ENCODE measurements at regions of chr2 and their contacts with region 1.

Region 1: DNA sequence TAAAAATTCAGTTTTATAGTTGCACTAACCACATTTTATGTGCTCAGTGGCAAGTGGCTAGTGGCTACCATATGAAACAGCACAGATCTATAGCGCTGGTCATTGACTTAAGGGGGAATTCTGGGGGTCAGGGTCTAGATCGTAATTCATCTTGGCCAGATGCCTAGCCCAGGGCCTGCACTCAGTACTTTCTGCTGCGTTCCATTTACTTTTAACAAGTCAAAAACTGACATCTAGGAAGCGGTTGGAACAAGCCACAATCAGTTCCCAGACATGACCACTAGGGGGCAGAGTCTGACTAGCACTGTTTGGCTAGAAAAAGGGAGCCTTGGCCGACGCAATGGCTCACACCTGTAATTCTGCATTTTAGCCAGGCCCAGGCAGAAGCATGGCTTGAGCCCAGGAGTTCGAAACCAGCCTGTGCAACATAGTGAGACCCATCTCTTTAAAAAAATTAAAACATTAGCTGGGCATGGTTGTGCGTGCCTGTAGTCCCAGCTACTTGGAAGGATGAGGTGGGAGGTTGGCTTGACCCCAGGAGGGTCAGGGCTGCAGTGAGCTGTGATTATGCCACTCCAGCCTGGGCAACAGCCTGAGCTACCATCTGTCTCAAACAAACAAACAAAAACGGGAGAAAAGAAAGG is 9.0 kb upstream of the TMBIM1 start:
- DNase-seq: peak; percentile 82 to 90 (median 83)
- H3K4me3 ChIP-seq: no peak overlapping the region
- H3K27ac ChIP-seq: no peak overlapping the region
- H3K4me1 ChIP-seq: peaks cover 2% of the 10 kb centered on the region
- H3K27me3 ChIP-seq: no peaks in the 10 kb centered on the region
- CTCF ChIP-seq: peak; percentile 93 to 98 (median 94)
- EP300 ChIP-seq: no peak
- POLR2A ChIP-seq: no peak

Region 2: DNA sequence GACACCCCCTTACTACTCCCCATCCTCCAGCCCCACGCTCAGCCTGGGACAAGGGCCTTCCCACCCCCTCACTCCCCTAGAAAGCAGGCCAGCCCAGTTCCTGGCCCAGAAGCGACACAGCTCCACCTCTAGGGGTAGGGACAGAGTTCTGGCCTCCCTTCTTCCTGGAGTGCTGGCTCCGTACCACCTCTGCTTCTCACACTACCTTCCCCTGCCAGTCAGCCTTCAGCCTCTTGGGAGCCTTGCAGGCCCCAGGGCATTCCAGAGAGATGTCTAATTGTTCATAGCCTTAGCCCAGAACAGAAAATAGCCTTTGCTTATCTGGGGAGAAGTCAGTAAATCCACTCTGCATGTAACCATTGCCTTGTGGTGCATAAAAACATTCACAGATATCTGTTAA is 42.3 kb after region 1 on chr2:
- intact Hi-C with region 1: no loop called
- DNase-seq: no peak
- H3K4me3 ChIP-seq: no peak overlapping the region
- H3K27ac ChIP-seq: no peak overlapping the region
- H3K4me1 ChIP-seq: no peaks in the 10 kb centered on the region
- H3K27me3 ChIP-seq: no peaks in the 10 kb centered on the region
- CTCF ChIP-seq: no peak
- EP300 ChIP-seq: no peak
- POLR2A ChIP-seq: no peak

Region 3: DNA sequence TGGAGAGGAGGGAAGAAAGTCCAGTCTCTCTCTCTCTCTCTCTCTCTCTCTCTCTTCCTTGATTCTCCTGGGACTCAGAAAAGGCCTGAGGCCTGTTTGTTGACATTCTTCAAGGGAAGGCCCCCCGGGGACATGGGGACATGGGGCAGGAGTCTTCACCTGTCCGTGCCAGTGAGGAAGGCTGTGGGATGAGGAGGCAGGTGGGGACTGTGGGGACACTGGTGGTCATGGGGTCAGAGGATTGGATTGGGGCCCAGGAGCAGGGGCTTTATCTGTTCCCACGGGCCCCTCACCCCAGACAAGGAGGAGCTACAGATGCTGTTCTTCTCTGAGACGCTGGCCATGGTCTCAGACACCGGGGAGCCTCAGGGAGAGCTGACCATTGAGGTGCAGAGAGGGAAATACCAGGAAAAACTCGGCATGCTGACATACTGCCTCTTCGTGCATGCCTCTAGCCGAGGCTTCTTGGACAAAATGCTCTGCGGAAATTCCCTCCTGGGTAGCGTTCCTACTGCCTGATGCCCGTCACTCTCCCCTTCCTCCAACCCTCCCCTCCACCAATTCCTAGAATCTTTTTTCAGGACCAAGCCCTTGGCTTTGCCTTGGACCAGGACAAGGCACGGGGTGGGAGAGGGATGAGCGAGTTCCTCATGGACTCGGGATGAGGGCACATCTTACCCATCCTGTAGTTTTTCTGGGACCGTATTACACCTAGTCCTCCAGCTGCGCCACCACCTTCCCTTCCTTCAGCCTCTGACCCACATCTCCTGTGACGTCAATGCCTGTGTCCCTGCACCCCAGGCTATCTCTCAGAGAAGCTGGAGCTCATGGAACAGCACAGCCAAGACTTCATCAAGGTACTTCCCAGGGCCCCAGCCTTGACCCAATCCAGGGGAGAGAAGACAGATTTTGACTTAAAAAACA is 56.2 kb after region 1 on chr2:
- intact Hi-C with region 1: no loop called
- DNase-seq: no peak
- H3K4me3 ChIP-seq: no peak overlapping the region
- H3K27ac ChIP-seq: no peak overlapping the region
- H3K4me1 ChIP-seq: peaks cover 1% of the 10 kb centered on the region
- H3K27me3 ChIP-seq: no peaks in the 10 kb centered on the region
- CTCF ChIP-seq: no peak
- EP300 ChIP-seq: no peak
- POLR2A ChIP-seq: no peak

Region 4: DNA sequence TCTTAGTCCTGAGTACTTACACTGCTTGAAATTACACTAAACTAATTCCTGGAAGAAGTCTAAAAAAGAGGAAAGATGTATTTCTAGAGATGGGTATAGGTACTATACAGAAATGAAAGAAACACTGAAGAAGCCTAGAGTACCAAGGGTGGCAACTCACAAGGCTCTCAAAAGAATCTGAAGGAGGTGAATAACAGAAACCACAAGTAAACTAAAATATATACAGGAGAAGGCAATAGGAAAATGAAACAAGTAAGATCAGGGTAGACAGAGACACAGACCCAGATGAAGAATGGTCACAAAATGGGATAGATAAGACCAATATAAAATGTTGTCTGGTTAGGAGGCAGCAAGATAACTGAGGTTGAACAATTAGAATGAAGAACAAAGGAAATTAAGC is 207.0 kb after region 1 on chr2:
- intact Hi-C with region 1: no loop called
- DNase-seq: no peak
- H3K4me3 ChIP-seq: no peak overlapping the region
- H3K27ac ChIP-seq: no peak overlapping the region
- H3K4me1 ChIP-seq: no peaks in the 10 kb centered on the region
- H3K27me3 ChIP-seq: no peaks in the 10 kb centered on the region
- CTCF ChIP-seq: no peak
- EP300 ChIP-seq: no peak
- POLR2A ChIP-seq: no peak

Region 5: DNA sequence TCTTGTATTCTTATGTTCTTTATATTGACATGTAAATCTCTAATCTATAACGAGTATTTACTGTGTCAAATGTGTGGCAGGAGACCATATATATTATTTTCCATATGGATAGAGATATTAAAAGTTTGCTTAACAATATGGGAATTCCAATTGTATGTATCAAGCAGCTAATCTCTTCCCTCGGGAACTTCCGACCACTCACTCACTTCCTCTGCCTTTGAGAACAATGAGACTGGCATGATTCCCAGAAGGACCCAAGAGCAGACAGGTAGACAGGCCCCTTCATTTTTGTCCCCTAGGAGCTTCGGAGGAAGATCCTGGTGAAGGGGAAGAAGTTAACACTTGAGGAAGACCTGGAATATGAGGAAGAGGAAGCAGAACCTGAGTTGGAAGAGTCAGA is 330.5 kb after region 1 on chr2:
- intact Hi-C with region 1: no loop called
- DNase-seq: no peak
- H3K4me3 ChIP-seq: no peak overlapping the region
- H3K27ac ChIP-seq: no peak overlapping the region
- H3K4me1 ChIP-seq: no peaks in the 10 kb centered on the region
- H3K27me3 ChIP-seq: no peaks in the 10 kb centered on the region
- CTCF ChIP-seq: no peak
- EP300 ChIP-seq: no peak
- POLR2A ChIP-seq: no peak

Region 6: GRCh38 chr2:218659258-218659987 is 358.1 kb after region 1 on chr2 and contains the starts of genes BCS1L and ZNF142:
- intact Hi-C with region 1: loop called in 1 of 4 experiments (anchors 5 kb)
- DNase-seq: peak; percentile 82 to 91 (median 83)
- H3K4me3 ChIP-seq: peak within 1 kb of the TSS; percentile 97
- H3K27ac ChIP-seq: no peak within 1 kb of the TSS
- H3K4me1 ChIP-seq: peaks cover 7% of the 10 kb centered on the region
- H3K27me3 ChIP-seq: no peaks in the 10 kb centered on the region
- CTCF ChIP-seq: no peak
- EP300 ChIP-seq: no peak
- POLR2A ChIP-seq: no peak
- total RNA-seq, gene BCS1L: 14.7 to 45.2 (median 35.0) TPM
- total RNA-seq, gene ZNF142: 10.9 to 33.9 (median 24.0) TPM

Measured in ovary (tissue), 10 donors.